Endothelial cell of umbilical vein (primary cell): ENCODE measurements at regions of chr2 and their contacts with region 1.

Region 1: GRCh38 chr2:85302121-85302520 is 25.7 kb downstream of the TGOLN2 start:
- DNase-seq: no peak
- H3K4me3 ChIP-seq: no peak overlapping the region
- H3K27ac ChIP-seq: no peak overlapping the region
- H3K4me1 ChIP-seq: no peaks in the 10 kb centered on the region
- H3K27me3 ChIP-seq: no peaks in the 10 kb centered on the region
- CTCF ChIP-seq: no peak
- POLR2A ChIP-seq: no peak

Region 2: DNA sequence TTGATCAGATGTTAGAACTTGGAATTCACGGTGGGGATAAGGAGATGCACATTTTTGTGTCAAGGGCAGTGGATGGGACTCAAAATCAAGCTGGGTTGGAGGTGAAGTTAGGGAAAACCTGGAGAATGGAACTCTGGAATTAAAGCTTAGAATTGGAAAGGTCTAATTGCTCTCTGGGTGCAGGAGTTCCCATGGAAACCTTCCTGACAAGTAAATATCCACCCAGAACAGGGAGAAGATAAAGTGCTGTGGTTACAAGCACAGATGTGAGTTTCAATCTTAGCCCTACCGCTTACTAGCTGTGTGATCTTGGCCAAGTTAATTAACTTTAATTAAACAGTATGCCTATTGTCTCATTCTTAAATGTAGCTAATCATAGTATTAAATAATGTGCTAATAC is 240.2 kb before region 1 on chr2:
- CTCF ChIA-PET with region 1: interaction called, 371 read pairs
- POLR2A ChIA-PET with region 1: interaction called, 7 read pairs
- dilution Hi-C with region 1: no loop called
- intact Hi-C with region 1: loop called (anchors 1 kb)
- DNase-seq: no peak
- H3K4me3 ChIP-seq: no peak overlapping the region
- H3K27ac ChIP-seq: no peak overlapping the region
- H3K4me1 ChIP-seq: no peaks in the 10 kb centered on the region
- H3K27me3 ChIP-seq: peaks cover 7 to 13% of the 10 kb centered on the region in 2 experiments
- CTCF ChIP-seq: no peak
- POLR2A ChIP-seq: no peak

Region 3: GRCh38 chr2:85485815-85486214 is 183.7 kb after region 1 on chr2:
- CTCF ChIA-PET with region 1: no interaction called
- POLR2A ChIA-PET with region 1: no interaction called
- dilution Hi-C with region 1: no loop called
- intact Hi-C with region 1: no loop called
- DNase-seq: no peak
- H3K4me3 ChIP-seq: no peak overlapping the region
- H3K27ac ChIP-seq: no peak overlapping the region
- H3K4me1 ChIP-seq: no peaks in the 10 kb centered on the region
- H3K27me3 ChIP-seq: no peaks in the 10 kb centered on the region
- CTCF ChIP-seq: no peak
- POLR2A ChIP-seq: no peak

Region 4: GRCh38 chr2:85797921-85798320 is 495.8 kb after region 1 on chr2:
- CTCF ChIA-PET with region 1: no interaction called
- POLR2A ChIA-PET with region 1: no interaction called
- dilution Hi-C with region 1: no loop called
- intact Hi-C with region 1: no loop called
- DNase-seq: peak; percentile 60
- H3K4me3 ChIP-seq: no peak overlapping the region
- H3K27ac ChIP-seq: no peak overlapping the region
- H3K4me1 ChIP-seq: peaks cover 15% of the 10 kb centered on the region
- H3K27me3 ChIP-seq: no peaks in the 10 kb centered on the region
- CTCF ChIP-seq: peak; percentile 62 to 70
- POLR2A ChIP-seq: no peak